HCT116 (cell line): ENCODE measurements at regions of chr21 and their contacts with region 1.

Region 1: GRCh38 chr21:34614633-34615486 is at the start of gene RCAN1:
- DNase-seq: peak; percentile 79
- ATAC-seq: peak; percentile 96
- H3K4me3 ChIP-seq: peak within 1 kb of the TSS; percentile 59 to 73
- H3K27ac ChIP-seq: peak within 1 kb of the TSS; percentile 53; the same call in 1 of the 2 replicates
- H3K4me1 ChIP-seq: peaks cover 5 to 12% of the 10 kb centered on the region in 2 experiments; a peak in 3 of 4 replicates
- H3K27me3 ChIP-seq: no peaks in the 10 kb centered on the region
- CTCF ChIP-seq: no peak
- POLR2A ChIP-seq: no peak
- RAD21 ChIP-seq: no peak
- total RNA-seq, gene RCAN1: 9.7 TPM

Region 2: DNA sequence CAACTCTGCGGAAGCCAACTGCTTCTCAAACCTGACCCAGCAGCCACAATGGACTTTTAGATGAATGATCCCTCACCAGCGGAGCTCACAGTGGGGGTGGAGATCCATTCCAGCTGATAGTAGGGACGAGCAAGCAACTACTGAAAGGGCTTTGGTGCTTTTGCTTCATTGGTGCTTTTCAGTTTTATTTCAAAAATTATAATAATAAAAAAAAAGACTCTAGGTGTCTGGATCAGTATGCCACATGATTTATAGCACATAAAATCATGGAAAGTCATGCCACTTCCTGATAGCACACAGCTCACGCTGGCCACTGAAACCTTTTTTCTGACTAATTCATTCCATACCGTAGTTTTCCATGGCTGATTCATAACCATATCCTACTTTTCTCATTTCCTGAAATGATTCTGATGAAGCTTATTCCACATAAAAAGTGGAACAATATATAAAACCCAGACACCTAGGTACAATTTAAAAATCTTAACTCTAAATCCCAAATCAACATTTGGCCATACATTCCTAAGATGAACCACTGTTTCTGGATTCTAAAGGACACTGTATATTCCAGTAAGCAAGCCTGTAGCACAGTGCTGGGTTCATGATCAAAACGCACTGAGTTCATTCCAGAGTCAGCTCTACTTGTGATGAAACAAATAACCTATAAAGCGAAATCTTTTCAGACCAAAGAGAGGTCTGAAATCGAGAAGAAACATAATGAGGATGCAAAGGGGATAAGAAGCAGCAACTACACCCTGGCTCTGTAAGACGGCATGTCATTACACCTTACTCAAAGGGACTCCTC is 61.5 kb before region 1 on chr21:
- CTCF ChIA-PET with region 1: no interaction called
- POLR2A ChIA-PET with region 1: no interaction called
- RAD21 ChIA-PET with region 1: no interaction called
- intact Hi-C with region 1: loop called (anchors 10 kb)
- DNase-seq: peak; percentile 10
- ATAC-seq: no peak
- H3K4me3 ChIP-seq: no peak overlapping the region
- H3K27ac ChIP-seq: no peak overlapping the region
- H3K4me1 ChIP-seq: peaks cover 0 to 12% of the 10 kb centered on the region in 2 experiments; a peak in 2 of 4 replicates
- H3K27me3 ChIP-seq: no peaks in the 10 kb centered on the region
- CTCF ChIP-seq: no peak
- POLR2A ChIP-seq: no peak
- RAD21 ChIP-seq: no peak

Region 3: DNA sequence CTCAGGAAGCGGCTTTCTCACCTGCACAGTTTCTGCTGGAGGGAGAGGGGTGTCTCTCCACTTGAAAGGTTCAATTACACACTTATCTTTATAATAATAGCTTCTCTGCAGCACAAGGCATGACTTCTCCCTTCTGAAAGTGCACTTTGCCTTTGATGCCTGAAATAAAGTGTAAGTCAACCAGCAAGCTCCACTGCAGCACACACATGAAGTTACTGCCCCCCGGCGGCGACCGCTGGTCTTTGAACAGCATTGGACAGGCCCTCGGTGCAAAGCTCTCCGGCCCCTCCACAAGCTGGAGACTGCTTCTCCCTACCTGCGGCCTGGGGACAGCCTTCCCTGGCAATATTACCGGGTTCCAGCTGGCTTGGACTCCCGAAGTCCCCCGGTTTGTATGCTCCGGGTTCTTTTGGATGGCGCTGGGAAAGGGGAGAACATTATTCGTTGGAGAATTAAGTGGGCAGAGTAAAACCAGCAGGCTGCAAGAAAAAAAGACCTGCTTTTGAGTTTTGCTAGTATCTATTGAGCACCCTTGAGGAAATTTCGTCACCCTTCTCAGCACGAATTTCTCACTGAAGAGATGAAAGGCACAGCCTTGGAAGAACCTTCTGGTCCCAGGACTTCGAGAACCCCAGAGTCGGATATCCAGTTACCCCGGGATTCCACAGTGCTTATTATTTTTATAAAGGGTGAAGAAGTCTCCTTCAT is 11.7 kb before region 1 on chr21:
- CTCF ChIA-PET with region 1: interaction called, 11 read pairs
- POLR2A ChIA-PET with region 1: interaction called, 7 read pairs
- RAD21 ChIA-PET with region 1: no interaction called
- intact Hi-C with region 1: no loop called
- DNase-seq: no peak
- ATAC-seq: peak; percentile 83
- H3K4me3 ChIP-seq: no peak overlapping the region
- H3K27ac ChIP-seq: no peak overlapping the region
- H3K4me1 ChIP-seq: peaks cover 19 to 27% of the 10 kb centered on the region in 2 experiments
- H3K27me3 ChIP-seq: no peaks in the 10 kb centered on the region
- CTCF ChIP-seq: peak; percentile 53 to 71 (median 63); a peak in 5 of 6 replicates
- POLR2A ChIP-seq: no peak
- RAD21 ChIP-seq: peak; percentile 82

Region 4: DNA sequence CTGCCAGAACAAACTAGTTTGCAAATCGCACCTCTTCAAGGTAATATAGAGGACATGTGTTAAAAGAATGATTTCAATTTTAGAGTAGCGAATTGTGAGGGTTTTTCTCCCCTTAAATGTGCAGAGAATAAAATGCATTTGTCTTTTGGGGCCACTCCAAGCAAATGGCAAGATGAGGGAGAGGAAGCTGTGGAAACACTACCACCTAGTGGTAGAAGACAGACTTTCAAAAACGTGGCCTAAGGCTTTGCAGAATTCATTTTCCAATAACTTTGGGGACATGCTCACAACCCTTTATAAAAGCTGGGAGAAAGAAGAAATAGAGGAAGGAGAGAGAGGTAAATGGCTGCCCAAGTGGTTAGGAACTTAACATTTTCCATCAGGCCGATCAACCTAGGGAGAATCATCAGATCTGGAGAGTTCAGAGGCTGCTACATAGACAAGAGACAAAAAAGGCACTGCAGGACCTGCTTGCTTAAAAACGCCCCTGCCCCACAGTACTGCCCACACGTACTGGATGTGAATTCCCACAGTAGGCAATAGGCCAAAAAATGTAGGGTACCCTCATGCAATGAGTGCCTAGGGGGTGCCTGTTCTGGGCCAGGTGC is 15.8 kb after region 1 on chr21:
- CTCF ChIA-PET with region 1: interaction called, 3 read pairs
- POLR2A ChIA-PET with region 1: no interaction called
- RAD21 ChIA-PET with region 1: no interaction called
- intact Hi-C with region 1: loop called (anchors 2 kb)
- DNase-seq: peak; percentile 45
- ATAC-seq: peak; percentile 86
- H3K4me3 ChIP-seq: no peak overlapping the region
- H3K27ac ChIP-seq: no peak overlapping the region
- H3K4me1 ChIP-seq: no peaks in the 10 kb centered on the region
- H3K27me3 ChIP-seq: 0 out of 2 replicates have a peak, but pooled peaks cover 7% of the 10 kb centered on the region
- CTCF ChIP-seq: peak; percentile 79 to 86 (median 80); a peak in 5 of 6 replicates
- POLR2A ChIP-seq: no peak
- RAD21 ChIP-seq: peak; percentile 89